ENCODE measurements at regions of chr4 and their contacts with region 1.

Region 1: GRCh38 chr4:153616006-153616555 is 68.0 kb upstream of the TLR2 start:
- DNase-seq: peak; percentile 84
- H3K4me3 Mint-ChIP-seq: no peak overlapping the region
- H3K27ac Mint-ChIP-seq: peak overlapping the region; percentile 77
- H3K4me1 Mint-ChIP-seq: peaks cover 42% of the 10 kb centered on the region
- H3K27me3 Mint-ChIP-seq: no peaks in the 10 kb centered on the region

Region 2: DNA sequence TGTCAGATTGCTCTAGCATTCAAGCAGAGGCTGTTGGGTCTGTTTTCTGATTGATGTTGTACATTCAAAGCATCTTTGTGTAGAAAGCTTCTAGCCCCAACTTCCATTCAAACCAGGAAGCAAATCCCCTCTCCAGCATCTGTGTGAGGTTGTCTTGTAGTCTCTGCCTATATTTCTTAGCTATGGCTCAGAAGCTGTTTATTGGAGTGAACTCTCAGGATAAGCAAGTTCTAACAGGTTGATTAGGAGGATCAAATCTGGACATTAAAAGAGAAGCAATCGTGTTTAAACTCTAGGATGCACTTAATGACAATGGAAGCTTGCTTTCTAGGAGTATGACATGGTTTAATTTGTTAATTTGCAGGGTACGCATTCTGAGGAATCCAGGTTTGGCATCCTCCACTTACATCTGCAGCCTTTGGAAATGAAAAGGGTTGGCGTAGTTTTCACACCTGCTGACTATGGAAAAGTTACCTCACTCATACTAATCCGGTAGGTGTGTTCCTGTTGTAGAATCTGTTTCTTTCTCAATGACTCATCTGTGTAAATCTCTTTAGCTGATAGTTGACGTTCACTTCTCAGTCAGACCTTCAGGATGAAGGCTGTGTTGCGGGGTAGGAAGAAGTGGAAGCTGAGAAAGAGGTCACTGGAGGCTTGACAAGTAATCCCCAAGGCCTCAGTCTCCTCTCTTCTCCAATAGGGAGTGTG is 20.0 kb before region 1 on chr4:
- CTCF ChIA-PET with region 1: interaction called, 5 read pairs
- intact Hi-C with region 1: loop called (anchors 1 kb)
- DNase-seq: peak; percentile 30
- H3K4me3 Mint-ChIP-seq: no peak overlapping the region
- H3K27ac Mint-ChIP-seq: peak overlapping the region; percentile 44
- H3K4me1 Mint-ChIP-seq: peaks cover 30% of the 10 kb centered on the region
- H3K27me3 Mint-ChIP-seq: no peaks in the 10 kb centered on the region

Region 3: DNA sequence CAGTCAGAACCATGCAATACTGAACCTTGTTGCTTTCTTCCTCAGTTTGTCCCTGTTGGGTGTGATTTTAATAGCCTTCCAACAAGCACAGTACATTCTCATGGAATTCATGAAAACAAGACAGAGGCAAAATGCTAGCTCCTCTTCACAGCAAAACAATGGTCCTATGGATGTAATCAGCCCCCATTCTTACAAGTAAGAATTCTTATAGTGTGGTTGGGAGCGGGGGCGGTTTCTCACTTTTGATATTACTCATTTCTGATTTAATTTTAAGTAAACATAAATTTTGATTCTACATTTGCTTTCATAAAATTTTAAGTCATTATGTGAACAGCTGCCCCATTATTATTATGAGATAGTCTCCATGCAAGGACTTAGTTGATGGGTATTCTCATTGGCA is 12.8 kb before region 1 on chr4:
- CTCF ChIA-PET with region 1: interaction called, 3 read pairs
- intact Hi-C with region 1: loop called (anchors 2 kb)
- DNase-seq: peak; percentile 51
- H3K4me3 Mint-ChIP-seq: no peak overlapping the region
- H3K27ac Mint-ChIP-seq: no peak overlapping the region
- H3K4me1 Mint-ChIP-seq: peaks cover 42% of the 10 kb centered on the region
- H3K27me3 Mint-ChIP-seq: no peaks in the 10 kb centered on the region

Region 4: DNA sequence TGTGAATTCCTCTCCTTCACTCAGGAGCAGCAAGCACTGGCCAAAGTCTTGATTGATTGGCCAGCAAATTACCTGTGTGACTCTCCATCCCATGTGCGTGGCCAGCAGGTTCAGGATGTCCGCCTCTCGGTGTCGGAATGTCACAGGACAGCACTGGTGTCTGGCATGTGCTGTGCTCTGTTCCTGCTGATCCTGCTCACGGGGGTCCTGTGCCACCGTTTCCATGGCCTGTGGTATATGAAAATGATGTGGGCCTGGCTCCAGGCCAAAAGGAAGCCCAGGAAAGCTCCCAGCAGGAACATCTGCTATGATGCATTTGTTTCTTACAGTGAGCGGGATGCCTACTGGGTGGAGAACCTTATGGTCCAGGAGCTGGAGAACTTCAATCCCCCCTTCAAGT is 88.4 kb after region 1 on chr4:
- CTCF ChIA-PET with region 1: no interaction called
- intact Hi-C with region 1: no loop called
- DNase-seq: no peak
- H3K4me3 Mint-ChIP-seq: no peak overlapping the region
- H3K27ac Mint-ChIP-seq: no peak overlapping the region
- H3K4me1 Mint-ChIP-seq: peaks cover 11% of the 10 kb centered on the region
- H3K27me3 Mint-ChIP-seq: no peaks in the 10 kb centered on the region

Region 5: DNA sequence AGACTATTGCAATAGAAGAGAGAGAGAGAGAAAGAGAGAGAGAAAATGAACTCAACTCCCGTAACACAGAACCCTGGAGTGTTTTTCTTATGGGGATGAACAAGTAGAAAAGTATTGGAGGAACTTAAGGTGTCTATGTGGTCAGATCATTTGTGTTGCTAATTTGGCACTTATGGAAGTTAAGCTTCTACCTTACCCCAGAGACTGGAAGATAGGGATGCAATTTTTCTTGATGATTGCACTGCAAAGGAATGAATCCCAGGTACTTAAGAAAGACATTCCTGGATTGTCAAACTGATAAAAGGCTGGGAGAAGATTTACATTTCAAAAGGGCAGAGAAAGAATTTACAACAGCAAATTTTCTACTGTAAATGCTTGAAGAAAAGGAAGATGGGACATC is 1703.4 kb after region 1 on chr4:
- CTCF ChIA-PET with region 1: no interaction called
- intact Hi-C with region 1: no loop called
- DNase-seq: no peak
- H3K4me3 Mint-ChIP-seq: no peak overlapping the region
- H3K27ac Mint-ChIP-seq: no peak overlapping the region
- H3K4me1 Mint-ChIP-seq: no peaks in the 10 kb centered on the region
- H3K27me3 Mint-ChIP-seq: peaks cover 11% of the 10 kb centered on the region